ENCODE measurements at regions of chr2 and their contacts with region 1.

Region 1: GRCh38 chr2:69811018-69811417 is 18.4 kb upstream of the GMCL1 start:
- DNase-seq: peak in 1 of 10 donors; percentile 58
- H3K4me3 ChIP-seq: no peak overlapping the region
- H3K27ac ChIP-seq: peak overlapping the region in 56 of 59 donors; percentile 21 to 90 (median 76)
- H3K27me3 ChIP-seq: no peaks in the 10 kb centered on the region
- CTCF ChIP-seq: no peak

Region 2: DNA sequence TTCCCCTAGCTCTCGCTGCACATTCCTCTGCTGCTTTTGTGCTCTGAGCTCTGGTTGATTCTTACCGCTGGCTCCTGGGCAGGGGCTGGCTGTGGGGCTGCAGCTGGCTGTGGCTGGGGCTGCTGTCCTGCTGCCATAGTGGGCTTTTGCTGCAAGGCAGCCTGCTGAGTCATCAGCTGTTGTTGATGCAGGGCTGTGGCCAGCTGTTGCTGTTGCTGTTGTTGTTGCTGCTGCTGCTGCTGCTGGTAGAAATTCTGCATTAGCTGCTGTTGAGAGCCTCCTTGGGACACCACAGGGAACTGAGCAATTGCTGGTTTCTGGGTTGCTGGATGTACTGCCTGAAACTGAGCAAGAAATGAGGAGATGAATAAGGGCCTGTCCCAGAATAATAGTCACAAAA is 296.6 kb before region 1 on chr2:
- intact Hi-C with region 1: no loop called
- DNase-seq: peak in 8 of 10 donors; percentile 30 to 71 (median 47)
- H3K4me3 ChIP-seq: peak overlapping the region in 2 of 59 donors; percentile 4 to 31
- H3K27ac ChIP-seq: peak overlapping the region; percentile 41 to 94 (median 84)
- H3K27me3 ChIP-seq: no peaks in the 10 kb centered on the region
- CTCF ChIP-seq: no peak

Region 3: GRCh38 chr2:69770193-69771146 is 40.5 kb before region 1 on chr2:
- intact Hi-C with region 1: loop called (anchors 1 to 5 kb)
- DNase-seq: peak in 1 of 10 donors; percentile 37
- H3K4me3 ChIP-seq: no peak overlapping the region
- H3K27ac ChIP-seq: peak overlapping the region in 51 of 59 donors; percentile 4 to 86 (median 66)
- H3K27me3 ChIP-seq: no peaks in the 10 kb centered on the region
- CTCF ChIP-seq: no peak